ENCODE measurements at regions of chrX and their contacts with region 1.

Region 1: DNA sequence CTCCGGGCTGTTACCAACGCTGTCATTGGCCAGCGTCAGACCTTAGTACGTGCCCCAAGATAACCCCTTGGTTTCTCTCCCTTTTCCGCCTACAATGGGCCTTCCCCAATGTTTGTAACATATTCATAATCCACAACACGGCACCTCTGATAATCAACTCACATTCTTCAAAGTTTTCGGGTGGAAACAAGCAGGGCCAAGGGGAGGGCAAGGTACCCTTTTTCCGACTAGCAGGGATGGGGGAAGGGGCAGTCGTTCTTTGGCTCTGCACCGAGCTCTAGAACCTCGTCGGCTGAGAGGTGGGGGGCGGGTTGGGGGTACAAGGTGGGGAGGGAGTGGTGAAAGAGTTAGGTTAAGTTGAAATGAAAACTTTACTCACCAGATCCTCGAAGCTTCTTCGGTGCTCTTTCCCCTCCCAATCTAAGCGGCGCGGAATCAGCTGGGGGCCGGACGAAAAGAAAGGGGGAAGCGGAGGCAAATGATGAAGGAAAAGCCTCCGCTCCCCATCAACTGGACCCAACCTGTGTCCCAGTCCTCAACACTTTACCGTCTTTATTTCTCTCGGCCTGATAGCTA is 1.4 kb downstream of the BRWD3 start:
- DNase-seq: peak; percentile 87
- H3K4me3 ChIP-seq: peak overlapping the region; percentile 74 to 93 (median 90)
- H3K27ac ChIP-seq: peak overlapping the region; percentile 60
- H3K4me1 ChIP-seq: peaks cover 4% of the 10 kb centered on the region
- H3K27me3 ChIP-seq: no peaks in the 10 kb centered on the region
- CTCF ChIP-seq: no peak
- POLR2A ChIP-seq: no peak

Region 2: GRCh38 chrX:80721185-80721584 is 87.1 kb before region 1 on chrX:
- CTCF ChIA-PET with region 1: no interaction called
- POLR2A ChIA-PET with region 1: no interaction called
- dilution Hi-C with region 1: no loop called
- intact Hi-C with region 1: loop called (anchors 5 kb)
- DNase-seq: no peak
- H3K4me3 ChIP-seq: no peak overlapping the region
- H3K27ac ChIP-seq: no peak overlapping the region
- H3K4me1 ChIP-seq: no peaks in the 10 kb centered on the region
- H3K27me3 ChIP-seq: no peaks in the 10 kb centered on the region
- CTCF ChIP-seq: no peak
- POLR2A ChIP-seq: no peak

Region 3: GRCh38 chrX:80841259-80841658 is 33.0 kb after region 1 on chrX:
- CTCF ChIA-PET with region 1: no interaction called
- POLR2A ChIA-PET with region 1: no interaction called
- dilution Hi-C with region 1: no loop called
- intact Hi-C with region 1: no loop called
- DNase-seq: no peak
- H3K4me3 ChIP-seq: no peak overlapping the region
- H3K27ac ChIP-seq: no peak overlapping the region
- H3K4me1 ChIP-seq: no peaks in the 10 kb centered on the region
- H3K27me3 ChIP-seq: no peaks in the 10 kb centered on the region
- CTCF ChIP-seq: no peak
- POLR2A ChIP-seq: no peak

Region 4: GRCh38 chrX:81121513-81122382 is 313.5 kb after region 1 on chrX:
- CTCF ChIA-PET with region 1: interaction called, 5 read pairs
- POLR2A ChIA-PET with region 1: no interaction called
- dilution Hi-C with region 1: no loop called
- intact Hi-C with region 1: loop called (anchors 1 kb)
- DNase-seq: peak; percentile 95
- H3K4me3 ChIP-seq: peak overlapping the region; percentile 44 to 88 (median 48)
- H3K27ac ChIP-seq: no peak overlapping the region
- H3K4me1 ChIP-seq: peaks cover 5% of the 10 kb centered on the region
- H3K27me3 ChIP-seq: peaks cover 2 to 12% of the 10 kb centered on the region in 2 experiments
- CTCF ChIP-seq: no peak
- POLR2A ChIP-seq: no peak

Region 5: DNA sequence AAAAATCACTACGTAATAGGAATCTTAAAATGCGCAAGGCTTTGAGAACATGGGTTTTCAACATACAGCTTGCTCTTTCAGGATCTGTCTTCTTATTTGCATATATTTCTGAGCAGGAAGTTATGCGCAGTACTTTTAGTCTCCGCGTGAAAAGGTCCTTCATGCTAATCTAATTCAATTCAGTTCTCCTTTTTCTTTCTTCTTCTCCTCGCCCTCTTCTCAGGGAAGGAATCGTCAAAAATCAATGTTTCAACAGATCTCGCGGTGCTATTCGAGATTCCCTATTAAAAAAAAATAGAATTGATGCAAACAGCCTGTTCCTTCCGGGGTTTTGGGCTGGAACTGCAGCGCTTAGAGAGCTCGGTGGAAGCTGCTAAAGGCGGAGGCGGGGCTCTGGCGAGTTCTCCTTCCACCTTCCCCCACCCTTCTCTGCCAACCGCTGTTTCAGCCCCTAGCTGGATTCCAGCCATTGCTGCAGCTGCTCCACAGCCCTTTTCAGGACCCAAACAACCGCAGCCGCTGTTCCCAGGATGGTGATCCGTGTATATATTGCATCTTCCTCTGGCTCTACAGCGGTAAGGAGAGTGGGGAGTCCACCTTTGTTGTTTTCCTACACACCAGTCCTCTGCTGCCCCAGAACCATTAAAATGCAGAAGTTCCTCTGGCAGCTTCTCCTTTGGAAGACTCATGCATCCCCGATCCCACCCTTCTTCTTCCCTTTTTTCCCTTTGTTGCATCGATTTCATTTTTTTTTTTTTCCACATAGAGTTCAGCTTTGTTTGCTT is 393.6 kb after region 1 on chrX and contains the starts of genes HMGN5 and SH3BGRL:
- CTCF ChIA-PET with region 1: no interaction called
- POLR2A ChIA-PET with region 1: no interaction called
- dilution Hi-C with region 1: no loop called
- intact Hi-C with region 1: loop called (anchors 5 kb)
- DNase-seq: peak; percentile 87
- H3K4me3 ChIP-seq: peak within 1 kb of the TSS; percentile 77 to 99 (median 97)
- H3K27ac ChIP-seq: peak within 1 kb of the TSS; percentile 86
- H3K4me1 ChIP-seq: peaks cover 10% of the 10 kb centered on the region
- H3K27me3 ChIP-seq: no peaks in the 10 kb centered on the region
- CTCF ChIP-seq: no peak
- POLR2A ChIP-seq: peak; percentile 46
- total RNA-seq, gene HMGN5: 5.3 and 6.1 TPM in 2 replicates
- total RNA-seq, gene SH3BGRL: 63.3 and 65.7 TPM in 2 replicates